ENCODE measurements at regions of chr4 and their contacts with region 1.

Region 1: DNA sequence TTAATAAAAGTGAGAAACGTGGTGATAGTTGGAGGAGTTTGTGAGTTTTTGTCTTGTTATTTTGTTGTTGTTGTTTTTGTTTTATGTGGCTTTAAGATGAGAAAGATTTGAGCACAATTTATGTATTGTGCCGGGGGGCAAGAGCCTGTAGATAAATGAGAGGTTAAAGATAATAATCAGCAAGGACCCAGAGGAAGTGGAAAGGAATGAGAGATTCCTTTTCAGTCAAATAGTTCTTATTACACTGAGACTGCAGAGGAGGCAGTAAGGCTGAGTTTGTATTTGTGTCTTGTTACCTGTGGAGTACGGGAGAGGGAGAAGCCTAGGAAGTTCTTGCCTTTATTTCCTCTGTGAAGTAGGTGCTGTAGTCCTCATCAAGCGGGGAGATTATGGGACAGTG is 29.9 kb upstream of the C4orf51 start:
- DNase-seq: no peak
- H3K4me3 ChIP-seq: no peak overlapping the region
- CTCF ChIP-seq: no peak
- POLR2A ChIP-seq: no peak

Region 2: DNA sequence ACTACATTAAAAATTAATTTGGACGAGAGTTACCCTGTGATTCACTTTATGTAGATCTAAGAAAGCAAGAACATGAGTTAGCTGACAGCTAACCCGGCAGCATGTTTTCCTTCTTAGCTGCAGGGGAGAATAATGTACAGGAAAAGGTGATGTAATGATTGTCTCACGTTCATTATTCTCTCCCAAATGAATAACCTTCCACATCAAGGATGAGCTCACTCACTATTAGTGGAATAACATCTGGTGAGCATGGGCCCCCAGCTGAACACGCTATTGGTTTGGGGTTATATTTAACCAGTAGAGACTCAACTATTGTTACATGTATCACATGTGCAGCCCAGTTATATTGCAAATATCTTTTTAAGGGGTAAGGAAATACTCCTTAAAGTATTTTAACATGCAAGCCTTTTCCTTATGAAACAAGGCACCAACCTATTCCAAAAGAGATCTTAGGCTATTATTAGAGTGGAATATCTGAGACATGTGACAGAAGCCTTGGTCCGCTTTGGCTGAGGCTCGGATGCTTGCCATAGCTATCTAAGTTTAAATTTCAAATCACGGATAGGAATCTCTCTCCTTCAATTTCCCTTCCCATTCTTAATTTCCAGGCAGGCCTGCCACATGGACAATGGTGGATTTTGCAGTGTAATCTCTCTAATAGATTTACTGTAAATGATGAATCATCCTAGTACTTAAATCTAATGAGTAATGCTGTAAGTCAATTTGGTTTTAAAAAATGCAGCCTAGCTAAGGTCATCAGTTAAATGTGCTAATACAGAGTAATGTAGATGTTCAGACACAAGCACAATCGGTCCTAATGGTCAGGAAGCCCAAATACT is 370.7 kb before region 1 on chr4:
- intact Hi-C with region 1: loop called (anchors 5 kb)
- DNase-seq: no peak
- H3K4me3 ChIP-seq: no peak overlapping the region
- CTCF ChIP-seq: no peak
- POLR2A ChIP-seq: no peak

Measured in lower leg skin (tissue), 4 donors.